ENCODE measurements at regions of chr12 and their contacts with region 1.

Region 1: GRCh38 chr12:1773937-1774655 is 46.3 kb upstream of the LRTM2 start:
- DNase-seq: peak in 1 of 2 donors; percentile 67
- ATAC-seq: peak; percentile 94 to 96 (median 95)
- H3K4me3 ChIP-seq: peak overlapping the region; percentile 45
- H3K27ac ChIP-seq: peak overlapping the region; percentile 81
- H3K4me1 ChIP-seq: peaks cover 41% of the 10 kb centered on the region
- H3K27me3 ChIP-seq: no peaks in the 10 kb centered on the region
- CTCF ChIP-seq: no peak

Region 2: GRCh38 chr12:1398673-1399072 is 375.4 kb before region 1 on chr12:
- intact Hi-C with region 1: no loop called
- DNase-seq: no peak
- ATAC-seq: no peak
- H3K4me3 ChIP-seq: no peak overlapping the region
- H3K27ac ChIP-seq: no peak overlapping the region
- H3K4me1 ChIP-seq: no peaks in the 10 kb centered on the region
- H3K27me3 ChIP-seq: no peaks in the 10 kb centered on the region
- CTCF ChIP-seq: no peak

Region 3: DNA sequence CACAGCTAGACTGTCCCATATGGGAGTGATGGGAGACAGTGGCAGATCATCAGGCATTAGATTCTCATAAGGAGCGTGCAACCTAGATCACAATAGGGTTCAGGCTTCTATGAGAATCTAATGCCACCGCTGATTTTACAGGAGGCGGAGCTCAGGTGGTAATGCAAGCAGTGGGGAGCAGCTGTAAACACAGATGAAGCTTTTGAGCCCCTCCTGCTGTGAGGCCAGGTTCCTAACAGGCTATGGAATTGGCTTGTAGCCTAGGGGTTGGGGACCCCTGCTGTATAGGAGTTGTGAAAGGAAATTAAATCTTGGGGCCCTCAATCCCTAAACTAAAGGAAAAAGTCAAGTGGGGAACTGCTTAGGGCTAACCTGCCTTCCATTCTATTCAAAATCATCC is 53.6 kb before region 1 on chr12:
- intact Hi-C with region 1: loop called in 1 of 2 experiments (anchors 2 kb)
- DNase-seq: no peak
- ATAC-seq: no peak
- H3K4me3 ChIP-seq: no peak overlapping the region
- H3K27ac ChIP-seq: peak overlapping the region; percentile 71
- H3K4me1 ChIP-seq: peaks cover 73% of the 10 kb centered on the region
- H3K27me3 ChIP-seq: no peaks in the 10 kb centered on the region
- CTCF ChIP-seq: no peak

Measured in psoas muscle (tissue), 8 donors.